ENCODE measurements at regions of chr7 and their contacts with region 1.

Region 1: GRCh38 chr7:37201003-37201875 is 247.4 kb downstream of the ELMO1 start:
- DNase-seq: peak; percentile 48 to 69
- H3K4me3 ChIP-seq: no peak overlapping the region
- H3K27ac ChIP-seq: no peak overlapping the region
- H3K4me1 ChIP-seq: no peaks in the 10 kb centered on the region
- H3K27me3 ChIP-seq: peaks cover 45% of the 10 kb centered on the region
- CTCF ChIP-seq: peak; percentile 90

Region 2: GRCh38 chr7:36440880-36441279 is 760.4 kb before region 1 on chr7:
- CTCF ChIA-PET with region 1: interaction called, 6 read pairs
- POLR2A ChIA-PET with region 1: no interaction called
- intact Hi-C with region 1: loop called (anchors 2 kb)
- DNase-seq: peak in 1 of 2 experiments; percentile 51
- H3K4me3 ChIP-seq: no peak overlapping the region
- H3K27ac ChIP-seq: no peak overlapping the region
- H3K4me1 ChIP-seq: no peaks in the 10 kb centered on the region
- H3K27me3 ChIP-seq: no peaks in the 10 kb centered on the region
- CTCF ChIP-seq: peak; percentile 74

Region 3: GRCh38 chr7:36473454-36474282 is 727.6 kb before region 1 on chr7:
- CTCF ChIA-PET with region 1: interaction called, 6 read pairs
- POLR2A ChIA-PET with region 1: no interaction called
- intact Hi-C with region 1: loop called (anchors 2 kb)
- DNase-seq: peak in 1 of 2 experiments; percentile 50
- H3K4me3 ChIP-seq: no peak overlapping the region
- H3K27ac ChIP-seq: no peak overlapping the region
- H3K4me1 ChIP-seq: no peaks in the 10 kb centered on the region
- H3K27me3 ChIP-seq: no peaks in the 10 kb centered on the region; the same call in 1 of the 2 replicates
- CTCF ChIP-seq: peak; percentile 75

Region 4: GRCh38 chr7:36487756-36488336 is 713.4 kb before region 1 on chr7:
- CTCF ChIA-PET with region 1: no interaction called
- POLR2A ChIA-PET with region 1: no interaction called
- intact Hi-C with region 1: loop called (anchors 1 kb)
- DNase-seq: peak; percentile 21 to 63
- H3K4me3 ChIP-seq: no peak overlapping the region
- H3K27ac ChIP-seq: no peak overlapping the region
- H3K4me1 ChIP-seq: no peaks in the 10 kb centered on the region
- H3K27me3 ChIP-seq: peaks cover 70% of the 10 kb centered on the region
- CTCF ChIP-seq: peak; percentile 83

Region 5: GRCh38 chr7:36670585-36671431 is 530.4 kb before region 1 on chr7:
- CTCF ChIA-PET with region 1: no interaction called
- POLR2A ChIA-PET with region 1: no interaction called
- intact Hi-C with region 1: loop called (anchors 5 kb)
- DNase-seq: peak in 1 of 2 experiments; percentile 55
- H3K4me3 ChIP-seq: no peak overlapping the region
- H3K27ac ChIP-seq: no peak overlapping the region
- H3K4me1 ChIP-seq: no peaks in the 10 kb centered on the region
- H3K27me3 ChIP-seq: peaks cover 28% of the 10 kb centered on the region
- CTCF ChIP-seq: peak; percentile 95

Region 6: DNA sequence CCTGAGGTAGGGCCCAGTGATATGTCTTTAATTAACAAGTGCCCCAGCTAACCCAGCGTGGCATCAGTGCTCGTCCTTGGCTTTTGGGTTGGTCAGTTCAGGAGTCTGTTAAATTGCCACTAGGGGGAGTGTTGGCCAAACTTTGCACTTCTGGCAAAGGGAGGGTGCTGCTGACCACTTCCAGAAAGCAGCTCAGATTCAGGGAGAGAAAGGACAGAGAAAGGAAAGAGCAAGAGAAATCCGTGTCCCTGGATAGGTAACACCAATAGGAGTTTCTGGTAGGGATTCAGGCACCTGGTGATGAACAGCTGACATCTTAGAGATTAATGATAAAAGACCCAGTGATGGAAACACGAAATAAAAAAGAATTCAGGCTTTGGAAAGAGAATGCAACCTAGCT is 233.9 kb before region 1 on chr7:
- CTCF ChIA-PET with region 1: interaction called, 11 read pairs
- POLR2A ChIA-PET with region 1: no interaction called
- intact Hi-C with region 1: loop called (anchors 1 kb)
- DNase-seq: peak; percentile 48 to 55
- H3K4me3 ChIP-seq: no peak overlapping the region
- H3K27ac ChIP-seq: no peak overlapping the region
- H3K4me1 ChIP-seq: no peaks in the 10 kb centered on the region
- H3K27me3 ChIP-seq: peaks cover 17% of the 10 kb centered on the region; the same call in 1 of the 2 replicates
- CTCF ChIP-seq: peak; percentile 96

Region 7: DNA sequence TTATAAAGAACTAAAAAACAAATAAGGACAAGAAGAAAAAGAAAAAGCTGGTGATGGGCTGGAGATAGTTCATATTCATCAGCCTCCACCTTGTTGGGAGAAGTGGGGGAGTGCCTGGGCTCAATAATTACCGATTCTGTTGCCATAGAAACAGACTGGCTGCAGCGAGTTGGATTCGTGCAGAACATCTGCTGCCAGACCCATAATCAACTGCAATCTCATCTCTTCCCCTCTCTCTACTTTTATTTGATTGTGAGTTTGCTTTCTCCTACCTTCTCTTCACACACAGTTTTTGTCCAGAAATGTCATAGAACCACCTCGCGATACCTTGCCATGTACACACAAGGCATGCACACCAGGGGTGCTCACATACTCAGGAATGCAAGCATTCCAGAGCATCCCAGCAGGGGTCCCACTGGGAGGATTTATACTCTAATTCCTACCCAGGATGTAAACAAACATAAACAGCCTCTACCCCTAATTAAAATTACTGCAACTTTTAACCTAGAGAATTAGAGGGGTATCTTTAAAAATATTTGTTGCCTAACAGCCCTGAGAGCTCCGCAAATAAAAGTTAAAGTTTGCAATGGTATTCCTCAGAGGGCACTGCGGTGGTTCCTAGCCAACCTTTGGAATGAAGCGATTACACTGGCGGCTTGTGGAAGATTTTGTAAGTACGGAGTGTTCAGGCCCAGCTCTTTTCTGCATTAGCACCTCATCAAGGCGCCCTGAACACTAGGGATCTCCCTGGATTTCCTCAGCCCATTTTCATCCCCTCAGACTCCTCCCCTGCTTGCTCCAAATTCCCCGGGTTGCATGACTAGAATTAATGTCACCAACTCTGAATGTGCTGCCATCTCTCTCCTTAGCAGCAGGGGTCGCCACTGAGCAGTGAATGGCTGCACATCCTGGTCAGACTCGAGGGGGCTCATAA is 214.5 kb before region 1 on chr7:
- CTCF ChIA-PET with region 1: no interaction called
- POLR2A ChIA-PET with region 1: no interaction called
- intact Hi-C with region 1: loop called (anchors 5 kb)
- DNase-seq: peak in 1 of 2 experiments; percentile 51
- H3K4me3 ChIP-seq: no peak overlapping the region
- H3K27ac ChIP-seq: no peak overlapping the region
- H3K4me1 ChIP-seq: no peaks in the 10 kb centered on the region
- H3K27me3 ChIP-seq: peaks cover 30% of the 10 kb centered on the region
- CTCF ChIP-seq: peak; percentile 94

Measured in PC-9 (cell line).